Testis (tissue), 5 donors: ENCODE measurements at regions of chr6 and their contacts with region 1.

Region 1: DNA sequence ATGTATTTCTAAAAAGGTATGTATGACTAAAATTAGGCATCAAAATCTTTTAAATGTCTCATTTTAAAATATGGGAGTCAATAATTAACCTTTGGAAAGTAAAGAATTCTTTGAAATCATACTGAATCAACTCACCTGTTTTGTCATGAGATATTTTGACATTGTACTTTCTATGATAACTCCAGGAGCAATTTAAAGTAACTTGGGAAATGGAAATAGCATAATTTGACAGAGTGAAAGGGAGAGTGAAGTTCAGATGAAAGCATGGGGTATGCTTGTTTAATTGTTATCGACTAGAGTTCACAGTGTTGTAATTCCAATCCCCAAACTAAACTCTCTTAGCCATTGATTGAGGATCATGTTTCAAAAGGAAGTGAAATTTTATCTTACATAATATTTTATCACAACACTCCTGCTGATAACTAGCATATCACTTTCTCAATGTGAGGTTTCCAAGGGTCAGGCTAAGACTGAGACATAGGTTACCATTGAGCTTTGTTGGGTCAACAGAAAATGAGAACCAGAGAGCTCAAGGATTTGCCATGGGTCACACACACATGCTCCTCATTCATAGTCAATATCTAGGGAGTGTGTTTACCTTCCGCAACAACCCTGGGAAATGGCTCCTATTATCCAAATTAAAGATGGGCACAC is 2.3 kb downstream of the GSTA1 start:
- DNase-seq: no peak
- H3K4me3 ChIP-seq: peak overlapping the region in 1 of 2 donors; percentile 58
- H3K27ac ChIP-seq: no peak overlapping the region
- H3K4me1 ChIP-seq: peaks cover 2% of the 10 kb centered on the region
- H3K27me3 ChIP-seq: no peaks in the 10 kb centered on the region
- CTCF ChIP-seq: no peak
- POLR2A ChIP-seq: no peak

Region 2: GRCh38 chr6:52144201-52145076 is 656.9 kb before region 1 on chr6:
- intact Hi-C with region 1: no loop called
- DNase-seq: no peak
- H3K4me3 ChIP-seq: no peak overlapping the region
- H3K27ac ChIP-seq: no peak overlapping the region
- H3K4me1 ChIP-seq: no peaks in the 10 kb centered on the region
- H3K27me3 ChIP-seq: no peaks in the 10 kb centered on the region
- CTCF ChIP-seq: no peak
- POLR2A ChIP-seq: no peak

Region 3: GRCh38 chr6:52253494-52253893 is 547.8 kb before region 1 on chr6:
- intact Hi-C with region 1: loop called (anchors 10 kb)
- DNase-seq: no peak
- H3K4me3 ChIP-seq: no peak overlapping the region
- H3K27ac ChIP-seq: no peak overlapping the region
- H3K4me1 ChIP-seq: no peaks in the 10 kb centered on the region
- H3K27me3 ChIP-seq: no peaks in the 10 kb centered on the region
- CTCF ChIP-seq: no peak
- POLR2A ChIP-seq: no peak

Region 4: DNA sequence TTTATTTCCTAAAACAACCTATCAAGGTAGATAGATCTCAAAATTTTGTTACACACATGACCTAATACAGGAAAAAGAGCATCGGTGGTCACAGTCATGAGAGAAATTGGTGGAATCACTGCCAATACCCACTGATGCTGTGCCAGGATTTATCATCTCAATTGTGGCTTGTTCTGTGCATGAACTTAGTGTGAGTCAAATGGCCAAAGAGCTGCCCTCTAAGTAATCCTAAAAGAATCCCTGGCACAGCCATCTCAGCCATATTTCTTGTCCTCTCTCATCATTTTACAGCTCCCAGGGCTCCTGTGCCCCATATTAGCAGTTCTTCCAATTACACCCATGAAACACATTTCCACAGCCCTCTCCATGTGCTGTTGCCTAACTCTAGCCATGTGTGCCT is 33.2 kb after region 1 on chr6:
- intact Hi-C with region 1: no loop called
- DNase-seq: no peak
- H3K4me3 ChIP-seq: no peak overlapping the region
- H3K27ac ChIP-seq: no peak overlapping the region
- H3K4me1 ChIP-seq: no peaks in the 10 kb centered on the region
- H3K27me3 ChIP-seq: no peaks in the 10 kb centered on the region
- CTCF ChIP-seq: no peak
- POLR2A ChIP-seq: no peak